Activated CD8-positive, alpha-beta T cell treated with anti-CD3 and anti-CD28 coated beads for 36 hours (primary cell): ENCODE measurements at regions of chr15 and their contacts with region 1.

Region 1: DNA sequence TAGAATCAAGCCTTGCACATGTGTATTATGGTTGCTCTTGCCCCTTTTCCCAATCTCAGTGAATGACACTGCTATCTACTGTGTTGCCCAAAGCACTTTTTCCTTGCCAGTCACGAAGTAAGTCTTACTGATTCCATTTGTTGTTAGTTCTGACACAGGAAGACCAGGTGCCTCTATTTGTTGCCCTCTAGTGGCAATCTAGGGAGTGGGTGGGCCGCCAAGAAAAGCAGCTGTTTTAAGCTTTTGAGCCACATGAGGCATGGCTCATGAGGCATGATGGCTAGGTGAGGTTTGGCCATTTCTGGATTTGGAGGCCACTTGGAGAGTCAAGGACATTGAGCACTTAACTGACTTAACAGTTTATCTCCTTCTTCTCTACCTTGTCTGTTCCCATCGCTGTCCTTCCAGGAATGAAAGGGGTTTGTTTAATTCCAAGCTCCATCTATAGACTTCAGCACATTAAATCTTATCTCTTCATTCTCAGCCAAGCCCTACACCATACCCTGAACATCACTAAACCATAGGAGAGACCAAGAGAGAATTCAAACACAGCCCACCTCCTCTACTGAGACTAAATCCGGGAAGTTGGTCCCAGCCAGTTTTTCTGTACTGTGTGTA is 103.1 kb downstream of the HCN4 start:
- DNase-seq: peak; percentile 72
- ATAC-seq: peak; percentile 82
- H3K4me3 Mint-ChIP-seq: no peak overlapping the region
- H3K27ac Mint-ChIP-seq: no peak overlapping the region
- H3K4me1 Mint-ChIP-seq: no peaks in the 10 kb centered on the region
- H3K27me3 Mint-ChIP-seq: peaks cover 1% of the 10 kb centered on the region
- CTCF ChIP-seq: peak; percentile 67

Region 2: GRCh38 chr15:73240866-73241499 is 24.7 kb before region 1 on chr15:
- CTCF ChIA-PET with region 1: interaction called, 76 read pairs
- POLR2A ChIA-PET with region 1: no interaction called
- intact Hi-C with region 1: no loop called
- DNase-seq: peak; percentile 87
- ATAC-seq: no peak
- H3K4me3 Mint-ChIP-seq: no peak overlapping the region
- H3K27ac Mint-ChIP-seq: no peak overlapping the region
- H3K4me1 Mint-ChIP-seq: no peaks in the 10 kb centered on the region
- H3K27me3 Mint-ChIP-seq: no peaks in the 10 kb centered on the region
- CTCF ChIP-seq: peak; percentile 85

Region 3: GRCh38 chr15:73249499-73249898 is 16.1 kb before region 1 on chr15:
- CTCF ChIA-PET with region 1: interaction called, 76 read pairs
- POLR2A ChIA-PET with region 1: no interaction called
- intact Hi-C with region 1: no loop called
- DNase-seq: no peak
- ATAC-seq: no peak
- H3K4me3 Mint-ChIP-seq: no peak overlapping the region
- H3K27ac Mint-ChIP-seq: no peak overlapping the region
- H3K4me1 Mint-ChIP-seq: no peaks in the 10 kb centered on the region
- H3K27me3 Mint-ChIP-seq: no peaks in the 10 kb centered on the region
- CTCF ChIP-seq: no peak

Region 4: DNA sequence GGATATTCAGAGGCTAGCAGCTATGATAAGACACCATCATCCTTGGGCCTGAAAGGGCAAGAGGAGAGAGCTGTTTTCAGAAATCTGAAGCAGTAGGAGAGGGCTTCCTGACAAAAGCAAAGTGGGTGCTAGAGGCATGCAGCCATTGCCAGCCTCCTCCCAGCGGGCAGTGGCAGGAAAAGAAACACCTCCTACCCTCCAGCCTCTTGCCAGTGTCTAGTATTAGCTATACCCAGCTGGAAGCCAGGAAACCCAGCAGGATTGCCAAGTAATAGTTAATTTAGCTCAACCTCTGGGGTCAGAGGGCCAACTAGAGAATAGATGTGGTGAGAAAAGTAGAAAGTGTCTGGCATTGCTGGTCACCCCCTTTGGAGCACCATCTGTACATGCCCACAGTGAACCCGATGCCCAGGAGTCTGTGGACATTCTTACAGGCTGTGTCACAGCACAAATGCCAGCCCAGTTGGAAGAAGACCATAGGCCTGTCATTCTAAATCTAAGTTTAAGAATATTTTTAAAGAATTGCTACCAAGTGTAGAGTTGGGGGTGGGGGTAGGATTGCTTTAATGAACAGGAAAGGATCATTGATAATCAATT is 17.8 kb after region 1 on chr15:
- CTCF ChIA-PET with region 1: interaction called, 13 read pairs
- POLR2A ChIA-PET with region 1: no interaction called
- intact Hi-C with region 1: no loop called
- DNase-seq: no peak
- ATAC-seq: no peak
- H3K4me3 Mint-ChIP-seq: no peak overlapping the region
- H3K27ac Mint-ChIP-seq: no peak overlapping the region
- H3K4me1 Mint-ChIP-seq: peaks cover 10% of the 10 kb centered on the region
- H3K27me3 Mint-ChIP-seq: peaks cover 2% of the 10 kb centered on the region
- CTCF ChIP-seq: no peak

Region 5: GRCh38 chr15:73677146-73677607 is 411.5 kb after region 1 on chr15:
- CTCF ChIA-PET with region 1: no interaction called
- POLR2A ChIA-PET with region 1: no interaction called
- intact Hi-C with region 1: no loop called
- DNase-seq: peak; percentile 59
- ATAC-seq: peak; percentile 79
- H3K4me3 Mint-ChIP-seq: no peak overlapping the region
- H3K27ac Mint-ChIP-seq: no peak overlapping the region
- H3K4me1 Mint-ChIP-seq: peaks cover 8% of the 10 kb centered on the region
- H3K27me3 Mint-ChIP-seq: peaks cover 30% of the 10 kb centered on the region
- CTCF ChIP-seq: peak; percentile 85